Adrenal gland (tissue), 19 donors: ENCODE measurements at regions of chr6 and their contacts with region 1.

Region 1: GRCh38 chr6:166382933-166383801 is at the start of gene MPC1:
- DNase-seq: peak; percentile 96 to 98 (median 96)
- H3K4me3 ChIP-seq: peak within 1 kb of the TSS; percentile 72 to 94 (median 81)
- H3K27ac ChIP-seq: peak within 1 kb of the TSS; percentile 70 to 96 (median 91)
- H3K4me1 ChIP-seq: peaks cover 6 to 20% of the 10 kb centered on the region in 2 donors
- H3K27me3 ChIP-seq: no peaks in the 10 kb centered on the region
- CTCF ChIP-seq: no peak
- POLR2A ChIP-seq: peak; percentile 22 to 74
- total RNA-seq, gene MPC1: 22.8 to 70.3 (median 42.9) TPM

Region 2: GRCh38 chr6:165967768-165968408 is 415.3 kb before region 1 on chr6:
- intact Hi-C with region 1: no loop called
- DNase-seq: no peak
- H3K4me3 ChIP-seq: no peak overlapping the region
- H3K27ac ChIP-seq: no peak overlapping the region
- H3K4me1 ChIP-seq: no peaks in the 10 kb centered on the region
- H3K27me3 ChIP-seq: no peaks in the 10 kb centered on the region
- CTCF ChIP-seq: no peak
- POLR2A ChIP-seq: no peak

Region 3: DNA sequence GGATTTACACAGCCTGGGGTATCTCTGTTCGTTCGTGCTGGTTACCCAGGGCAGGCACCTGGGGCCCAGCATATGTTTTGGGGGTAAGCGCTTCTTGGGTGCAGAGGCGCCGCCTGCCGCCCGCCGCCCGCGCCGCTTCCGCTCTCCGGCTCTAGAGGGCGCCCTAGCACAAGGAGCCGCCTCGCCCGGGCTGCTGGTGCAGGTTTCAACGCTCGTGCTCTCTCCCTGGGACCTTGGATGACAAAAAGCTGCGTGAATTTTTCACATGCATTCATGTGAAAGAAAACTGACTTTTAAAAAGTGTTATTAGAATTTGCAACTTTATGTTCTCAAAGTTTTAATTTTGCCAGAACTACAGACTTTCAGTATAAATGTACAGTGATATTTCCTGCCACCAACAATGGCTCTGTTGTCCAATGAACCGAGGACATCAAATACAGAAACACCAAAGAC is 107.4 kb before region 1 on chr6:
- intact Hi-C with region 1: loop called in 1 of 2 experiments (anchors 5 kb)
- DNase-seq: peak; percentile 45 to 80 (median 70)
- H3K4me3 ChIP-seq: no peak overlapping the region
- H3K27ac ChIP-seq: no peak overlapping the region
- H3K4me1 ChIP-seq: no peaks in the 10 kb centered on the region
- H3K27me3 ChIP-seq: no peaks in the 10 kb centered on the region
- CTCF ChIP-seq: peak; percentile 84 to 99 (median 93)
- POLR2A ChIP-seq: no peak

Region 4: DNA sequence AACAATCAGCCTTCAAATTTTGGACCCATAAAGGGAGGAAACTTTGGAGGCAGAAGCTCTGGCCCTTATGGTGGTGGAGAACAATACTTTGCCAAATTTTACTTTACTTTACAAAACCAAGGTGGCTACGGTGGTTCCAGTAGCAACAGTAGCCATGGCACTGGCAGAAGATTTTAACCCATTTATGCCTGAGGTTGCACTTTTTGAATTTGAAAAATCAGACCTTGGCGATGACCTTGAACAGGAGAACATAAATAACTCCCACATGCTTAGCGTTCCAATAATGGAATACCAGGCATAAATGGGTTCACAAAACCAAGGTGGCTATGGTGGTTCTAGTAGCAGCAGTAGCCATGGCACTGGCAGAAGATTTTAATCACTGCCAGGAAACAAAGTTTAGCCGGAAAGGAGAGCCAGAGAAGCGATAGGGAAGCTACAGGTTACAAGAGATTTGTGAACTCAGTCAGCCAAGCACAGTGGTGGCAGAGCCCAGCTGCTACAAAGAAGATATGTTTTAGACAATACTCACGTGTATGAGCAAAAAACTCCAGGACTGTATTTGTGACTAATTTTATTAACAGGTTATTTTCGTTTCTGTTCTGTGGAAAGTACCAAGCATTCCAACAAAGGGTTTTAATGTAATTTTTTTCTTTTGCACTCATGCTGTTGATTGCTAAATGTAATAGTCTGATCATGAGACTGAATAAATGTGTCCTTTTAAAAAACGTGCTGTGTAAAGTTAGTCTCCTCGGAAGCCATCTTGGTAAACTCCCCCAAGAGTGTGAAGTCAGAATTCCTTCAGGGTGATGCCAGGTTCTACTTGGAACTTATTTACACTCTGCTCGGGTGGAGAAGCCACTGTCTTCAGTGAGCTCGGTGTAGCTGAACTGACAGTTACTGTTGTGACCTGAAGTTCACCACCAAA is 47.5 kb before region 1 on chr6:
- intact Hi-C with region 1: loop called in 1 of 2 experiments (anchors 5 kb)
- DNase-seq: no peak
- H3K4me3 ChIP-seq: no peak overlapping the region
- H3K27ac ChIP-seq: no peak overlapping the region
- H3K4me1 ChIP-seq: peaks cover 0 to 32% of the 10 kb centered on the region in 2 donors
- H3K27me3 ChIP-seq: no peaks in the 10 kb centered on the region
- CTCF ChIP-seq: no peak
- POLR2A ChIP-seq: no peak